Sciatic nerve (tissue), 2 donors: ENCODE measurements at regions of chr12 and their contacts with region 1.

Region 1: DNA sequence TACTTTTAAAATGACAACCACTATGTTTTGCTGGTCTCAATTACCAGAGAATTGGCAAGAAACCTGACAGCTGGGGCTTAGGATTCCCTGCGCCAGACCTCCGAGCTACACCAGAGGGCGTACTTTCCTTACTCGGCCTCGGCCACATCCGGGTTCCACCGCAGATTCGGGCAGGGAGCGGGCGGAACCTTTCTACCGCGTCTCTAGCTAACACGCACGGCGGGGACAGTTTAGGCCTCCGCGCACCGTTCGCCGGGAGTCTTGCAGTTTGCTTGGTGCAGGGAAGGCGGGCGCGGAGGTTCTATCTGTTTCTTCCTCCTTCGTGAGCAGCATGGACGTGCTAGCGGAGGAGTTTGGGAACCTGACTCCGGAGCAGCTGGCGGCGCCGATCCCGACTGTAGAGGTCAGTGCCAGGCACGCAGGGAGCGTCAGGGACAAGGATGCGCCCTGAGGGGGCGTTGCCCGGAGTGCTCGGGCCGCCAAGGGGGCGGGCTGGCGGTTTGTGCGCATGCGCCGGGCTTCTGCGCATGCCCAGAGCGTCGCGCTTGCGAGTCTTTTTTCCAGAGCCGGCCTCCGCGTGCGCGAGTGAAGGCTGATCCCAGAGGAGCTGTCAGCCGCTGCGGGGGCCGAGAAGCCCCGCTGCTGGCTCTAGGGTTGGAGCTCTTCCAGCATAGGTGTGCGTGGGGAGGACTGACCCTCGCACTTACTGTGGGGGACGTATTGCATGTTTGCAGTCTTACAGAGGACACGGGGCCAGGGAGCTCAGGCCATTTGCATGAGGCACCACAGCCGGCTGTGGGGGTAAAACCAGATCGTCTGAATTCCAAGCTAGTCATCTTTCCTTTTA is at the start of gene POLR3B:
- DNase-seq: peak; percentile 97
- ATAC-seq: peak; percentile 98
- total RNA-seq, gene POLR3B: 6.1 TPM

Region 2: DNA sequence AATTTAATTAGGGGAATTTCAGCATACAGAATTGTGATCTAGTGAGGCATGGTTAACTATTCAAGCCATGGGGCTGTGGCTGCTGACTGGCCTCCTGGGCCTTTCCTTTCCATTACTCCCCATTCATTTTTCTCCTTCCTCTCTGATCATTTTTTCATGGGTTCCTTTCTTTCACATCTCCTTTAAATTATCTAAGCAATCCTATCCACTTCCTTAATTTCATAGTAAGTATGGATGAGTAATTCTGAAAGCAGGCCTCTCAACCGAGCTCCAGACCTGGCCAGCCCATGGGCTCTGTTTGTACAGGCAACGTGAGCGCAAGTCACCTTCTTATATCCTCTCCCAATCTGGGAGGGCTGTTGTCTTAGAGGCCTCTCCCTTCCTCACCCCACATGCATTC is 123.3 kb before region 1 on chr12:
- intact Hi-C with region 1: loop called (anchors 10 kb)
- DNase-seq: no peak
- ATAC-seq: no peak

Region 3: DNA sequence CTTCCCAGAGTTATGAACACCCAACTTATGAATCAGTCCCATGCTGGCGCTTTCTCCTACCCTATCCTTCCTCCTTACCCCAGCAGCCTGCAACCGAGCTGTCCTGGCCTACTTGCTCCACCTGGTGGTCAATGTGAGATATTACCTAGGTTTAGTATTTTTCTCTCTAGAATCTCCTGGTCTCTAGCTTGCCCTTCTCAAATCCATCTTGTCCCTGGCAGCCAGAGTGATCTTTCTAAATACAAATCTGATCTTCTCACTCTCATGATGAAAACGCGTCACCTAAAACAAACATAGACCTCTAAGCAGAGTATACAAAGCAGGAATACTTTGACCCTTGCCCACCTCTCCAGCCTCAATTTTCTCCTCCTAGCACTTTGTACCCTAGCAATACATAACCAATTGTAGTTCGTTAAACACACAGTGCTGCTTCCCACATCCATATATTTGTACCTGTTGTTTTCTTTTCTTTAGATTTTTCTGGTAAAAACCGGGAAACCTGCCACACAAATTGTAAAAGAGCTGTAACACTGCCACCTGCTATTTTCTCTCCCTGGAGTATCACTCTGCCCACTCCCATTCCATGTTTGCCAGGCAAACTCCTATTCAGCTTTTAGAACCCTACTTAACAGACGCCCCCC is 75.2 kb before region 1 on chr12:
- intact Hi-C with region 1: loop called (anchors 2 kb)
- DNase-seq: no peak
- ATAC-seq: peak; percentile 57